ENCODE measurements at regions of chr22 and their contacts with region 1.

Region 1: GRCh38 chr22:31206906-31207678 is 5.0 kb upstream of the LIMK2 start:
- DNase-seq: no peak
- H3K4me3 ChIP-seq: no peak overlapping the region
- CTCF ChIP-seq: no peak

Region 2: DNA sequence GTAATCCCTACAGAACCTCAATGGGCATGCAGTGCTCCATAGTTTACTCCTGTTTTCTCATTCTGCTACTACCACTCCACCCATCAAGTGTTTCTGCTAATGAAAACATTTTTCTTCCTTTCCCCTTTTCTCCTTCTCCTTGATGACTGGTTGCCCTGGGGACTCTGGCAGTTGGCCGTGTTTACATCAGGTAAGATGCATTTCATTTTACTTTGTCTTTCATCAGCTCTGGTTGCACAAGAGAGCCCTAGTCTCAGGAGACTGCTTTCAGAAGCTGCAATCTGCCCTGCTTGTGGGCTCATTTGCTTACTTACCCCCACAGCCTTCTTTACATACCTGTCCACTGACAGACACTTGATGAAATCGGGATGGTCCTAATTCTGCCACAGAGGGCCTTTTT is 14.6 kb before region 1 on chr22:
- CTCF ChIA-PET with region 1: interaction called, 79 read pairs
- POLR2A ChIA-PET with region 1: no interaction called
- DNase-seq: peak; percentile 28
- H3K4me3 ChIP-seq: no peak overlapping the region
- CTCF ChIP-seq: no peak

Region 3: GRCh38 chr22:31661851-31662656 is 455.0 kb after region 1 on chr22 and contains the start of gene PISD:
- CTCF ChIA-PET with region 1: no interaction called
- POLR2A ChIA-PET with region 1: no interaction called
- DNase-seq: no peak
- H3K4me3 ChIP-seq: peak within 1 kb of the TSS; percentile 98
- CTCF ChIP-seq: no peak

Measured in AG04449 (cell line).